Aorta (tissue), 5 donors: ENCODE measurements at regions of chr16 and their contacts with region 1.

Region 1: GRCh38 chr16:58629572-58630104 is at the start of gene CNOT1:
- DNase-seq: peak; percentile 98
- ATAC-seq: peak; percentile 97
- H3K4me3 ChIP-seq: peak within 1 kb of the TSS; percentile 64 to 91
- H3K27ac ChIP-seq: peak within 1 kb of the TSS; percentile 87 to 96
- H3K4me1 ChIP-seq: no peaks in the 10 kb centered on the region
- H3K27me3 ChIP-seq: no peaks in the 10 kb centered on the region
- total RNA-seq, gene CNOT1: 103 to 124 TPM

Region 2: GRCh38 chr16:58392215-58393137 is 237.2 kb before region 1 on chr16 and contains the start of gene GINS3:
- intact Hi-C with region 1: loop called in 1 of 2 experiments (anchors 2 kb)
- DNase-seq: peak; percentile 93 to 94
- ATAC-seq: peak; percentile 97
- H3K4me3 ChIP-seq: peak within 1 kb of the TSS; percentile 29 to 84
- H3K27ac ChIP-seq: peak within 1 kb of the TSS in 1 of 2 donors; percentile 4
- H3K4me1 ChIP-seq: no peaks in the 10 kb centered on the region
- H3K27me3 ChIP-seq: no peaks in the 10 kb centered on the region
- total RNA-seq, gene GINS3: 1.8 to 2.2 TPM

Region 3: DNA sequence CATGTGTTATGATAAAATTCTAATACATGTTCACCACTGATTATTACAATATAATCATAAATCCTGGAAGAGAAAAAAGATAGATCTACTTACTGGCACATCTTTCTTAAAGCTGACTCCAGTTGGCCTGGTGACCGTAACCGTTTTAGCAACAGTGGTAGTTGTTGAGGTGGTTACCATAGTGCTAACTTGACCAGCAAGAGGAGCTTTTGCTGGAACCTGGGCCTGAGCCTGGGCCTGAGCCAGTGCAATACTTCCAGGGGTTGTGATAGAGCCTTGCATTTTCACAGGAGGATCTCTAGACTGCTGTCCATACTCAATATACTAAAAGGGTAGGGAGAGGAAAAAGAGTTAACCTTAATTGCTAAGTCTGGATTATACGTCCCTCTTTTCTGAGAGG is 78.1 kb before region 1 on chr16:
- intact Hi-C with region 1: no loop called
- DNase-seq: no peak
- ATAC-seq: no peak
- H3K4me3 ChIP-seq: no peak overlapping the region
- H3K27ac ChIP-seq: no peak overlapping the region
- H3K4me1 ChIP-seq: no peaks in the 10 kb centered on the region
- H3K27me3 ChIP-seq: no peaks in the 10 kb centered on the region

Region 4: GRCh38 chr16:58906981-58907715 is 277.5 kb after region 1 on chr16:
- intact Hi-C with region 1: no loop called
- DNase-seq: no peak
- ATAC-seq: peak; percentile 60
- H3K4me3 ChIP-seq: no peak overlapping the region
- H3K27ac ChIP-seq: no peak overlapping the region
- H3K4me1 ChIP-seq: no peaks in the 10 kb centered on the region
- H3K27me3 ChIP-seq: no peaks in the 10 kb centered on the region